ENCODE measurements at regions of chr3 and their contacts with region 1.

Region 1: DNA sequence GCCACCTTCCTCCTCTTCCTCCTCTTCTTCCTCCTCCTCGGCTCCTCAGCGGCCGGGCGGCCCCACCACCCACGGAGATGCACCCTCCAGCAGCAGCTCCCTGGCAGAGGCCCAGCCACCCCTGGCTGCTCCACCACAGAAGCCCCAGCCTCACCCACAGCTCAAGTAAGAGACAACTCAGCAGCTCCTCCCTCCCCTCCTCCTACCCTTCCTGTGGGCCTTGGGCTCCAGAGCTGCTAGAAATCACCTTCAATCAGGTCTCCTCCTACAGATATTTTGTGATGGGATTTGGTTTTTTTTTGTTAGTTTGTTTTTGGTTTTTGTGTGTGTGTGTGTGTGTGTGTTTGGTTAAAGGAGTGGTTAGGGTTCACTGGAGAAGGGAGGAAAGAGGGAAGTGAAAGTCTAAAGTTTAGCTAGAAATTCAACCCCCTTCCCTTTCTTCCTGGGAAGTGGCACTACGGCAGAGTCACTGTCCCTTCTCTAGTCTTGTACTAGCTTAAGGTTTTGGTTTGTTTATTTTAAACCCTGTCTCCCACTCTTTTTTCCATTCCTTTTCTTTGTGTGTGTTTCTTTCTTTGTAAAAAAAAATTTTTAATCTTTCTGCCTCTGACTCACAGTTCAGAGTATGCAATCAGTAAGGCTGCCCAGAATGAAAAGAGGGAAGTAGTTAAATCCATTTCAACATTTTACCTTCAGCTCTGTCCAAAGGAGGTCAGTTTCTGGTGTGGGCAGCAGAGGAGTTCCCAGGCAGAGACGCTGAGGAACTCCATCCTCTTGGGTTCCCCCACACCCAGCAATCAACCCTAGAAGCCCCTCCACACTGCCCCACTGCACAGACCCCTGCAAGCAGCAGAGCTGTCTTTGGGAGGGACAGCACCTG is 29.0 kb upstream of the TIMP4 start:
- DNase-seq: peak; percentile 56
- H3K4me3 Mint-ChIP-seq: peak overlapping the region; percentile 21
- H3K27ac Mint-ChIP-seq: peak overlapping the region; percentile 94
- H3K4me1 Mint-ChIP-seq: peaks cover 90% of the 10 kb centered on the region
- H3K27me3 Mint-ChIP-seq: peaks cover under 1% of the 10 kb centered on the region

Region 2: DNA sequence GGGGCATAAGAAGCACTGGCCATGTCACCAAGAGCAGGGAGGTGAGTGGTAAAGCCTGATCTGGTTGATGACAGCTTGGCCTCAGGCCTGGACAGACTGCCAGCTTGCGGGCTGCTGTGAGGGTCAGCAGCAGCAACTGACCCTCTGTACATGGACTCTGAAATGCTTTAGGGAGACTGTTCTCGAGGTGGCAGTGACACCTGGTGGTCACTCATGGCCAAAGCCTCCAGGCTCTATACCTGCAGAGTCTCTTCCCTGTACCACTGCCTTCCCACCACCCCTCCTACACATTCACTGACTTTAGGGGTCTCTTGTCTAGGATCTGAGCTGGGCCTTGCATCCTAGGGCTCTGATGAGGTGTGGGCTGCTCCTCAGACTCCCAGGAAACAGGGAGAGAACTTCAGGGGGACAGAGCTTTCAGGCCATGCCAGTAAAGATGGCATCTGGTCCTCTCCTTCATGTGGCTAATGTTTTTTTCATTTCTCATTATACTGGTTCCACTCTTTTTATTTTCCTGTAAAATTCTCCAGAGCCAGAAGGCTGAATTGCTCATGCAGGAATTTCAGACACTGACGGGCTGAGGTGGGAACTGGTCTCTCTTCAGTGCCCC is 11.7 kb before region 1 on chr3:
- intact Hi-C with region 1: loop called (anchors 1 kb)
- DNase-seq: no peak
- H3K4me3 Mint-ChIP-seq: no peak overlapping the region
- H3K27ac Mint-ChIP-seq: no peak overlapping the region
- H3K4me1 Mint-ChIP-seq: peaks cover 48% of the 10 kb centered on the region
- H3K27me3 Mint-ChIP-seq: no peaks in the 10 kb centered on the region

Region 3: GRCh38 chr3:12287727-12288191 is 100.1 kb after region 1 on chr3:
- intact Hi-C with region 1: loop called (anchors 5 kb)
- DNase-seq: no peak
- H3K4me3 Mint-ChIP-seq: peak overlapping the region; percentile 60
- H3K27ac Mint-ChIP-seq: peak overlapping the region; percentile 23
- H3K4me1 Mint-ChIP-seq: peaks cover 5% of the 10 kb centered on the region
- H3K27me3 Mint-ChIP-seq: peaks cover 61% of the 10 kb centered on the region

Region 4: GRCh38 chr3:12508291-12508700 is 320.6 kb after region 1 on chr3:
- intact Hi-C with region 1: no loop called
- DNase-seq: no peak
- H3K4me3 Mint-ChIP-seq: no peak overlapping the region
- H3K27ac Mint-ChIP-seq: no peak overlapping the region
- H3K4me1 Mint-ChIP-seq: no peaks in the 10 kb centered on the region
- H3K27me3 Mint-ChIP-seq: no peaks in the 10 kb centered on the region

Measured in activated T-helper 1 cell treated with anti-CD3 and anti-CD28 coated beads, Interleukin-12 subunit alpha, Interleukin-12 subunit beta, Interleukin-2, Interleukin-4 antibody, amounts not matched to agents 30 ng/mL and 10 ng/mL and 1 ng/mL, durations not matched to agents 14 hours and 24 hours and 36 hours (primary cell).